Transverse colon (tissue), 4 donors: ENCODE measurements at regions of chr18 and their contacts with region 1.

Region 1: GRCh38 chr18:77114415-77115191 is 18.0 kb downstream of the MBP start:
- DNase-seq: peak; percentile 83
- H3K4me3 ChIP-seq: peak overlapping the region in 1 of 4 donors; percentile 2
- H3K27ac ChIP-seq: peak overlapping the region; percentile 83 to 92 (median 89)
- H3K4me1 ChIP-seq: peaks cover 19 to 46% (median 34%) of the 10 kb centered on the region in 4 donors
- H3K27me3 ChIP-seq: no peaks in the 10 kb centered on the region
- CTCF ChIP-seq: no peak
- EP300 ChIP-seq: peak; percentile 75
- POLR2A ChIP-seq: peak; percentile 51

Region 2: DNA sequence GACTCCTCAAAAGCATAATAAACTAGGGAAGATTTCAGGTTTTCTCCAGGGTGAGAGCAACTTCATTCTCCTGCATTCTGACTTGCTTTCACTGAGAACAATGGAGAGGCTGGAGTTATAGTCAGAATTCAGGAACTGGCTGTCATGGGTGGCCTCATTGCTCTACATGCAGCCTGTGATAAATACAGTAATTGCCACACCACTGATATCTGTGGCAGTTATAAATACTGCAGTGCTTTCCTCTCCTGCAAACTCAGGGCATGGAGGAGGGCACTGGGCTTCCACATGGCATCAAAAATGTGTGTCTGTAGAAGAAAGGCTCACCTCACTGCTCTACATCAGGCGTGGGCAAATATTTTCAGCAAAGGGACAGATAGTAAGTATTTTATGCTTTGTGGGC is 1129.8 kb before region 1 on chr18:
- in situ Hi-C with region 1: no loop called
- intact Hi-C with region 1: loop called (anchors 5 kb)
- DNase-seq: no peak
- H3K4me3 ChIP-seq: no peak overlapping the region
- H3K27ac ChIP-seq: no peak overlapping the region
- H3K4me1 ChIP-seq: no peaks in the 10 kb centered on the region
- H3K27me3 ChIP-seq: no peaks in the 10 kb centered on the region
- CTCF ChIP-seq: no peak
- EP300 ChIP-seq: no peak
- POLR2A ChIP-seq: no peak

Region 3: DNA sequence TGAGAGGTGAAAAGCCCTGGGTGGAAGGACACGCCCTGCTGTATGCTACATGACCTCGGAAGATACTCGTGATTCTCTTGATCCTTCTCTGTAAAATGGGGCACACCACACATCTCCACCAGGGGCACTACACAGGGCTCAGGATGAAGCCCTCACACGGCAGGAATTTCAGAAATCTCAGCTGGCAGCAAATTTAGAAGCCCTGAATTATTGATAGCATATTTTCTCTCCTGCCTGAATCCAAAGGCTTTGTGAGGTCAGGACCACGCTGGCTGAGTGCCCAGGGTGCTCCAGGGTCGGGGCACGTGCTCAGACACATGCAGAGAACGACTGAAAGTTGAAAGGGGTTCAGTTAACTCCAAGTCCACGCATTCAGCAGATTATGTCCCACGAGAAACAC is 92.9 kb after region 1 on chr18:
- in situ Hi-C with region 1: no loop called
- intact Hi-C with region 1: no loop called
- DNase-seq: peak; percentile 32
- H3K4me3 ChIP-seq: no peak overlapping the region
- H3K27ac ChIP-seq: peak overlapping the region; percentile 44 to 69 (median 67)
- H3K4me1 ChIP-seq: peaks cover 0 to 34% (median 5%) of the 10 kb centered on the region in 4 donors
- H3K27me3 ChIP-seq: no peaks in the 10 kb centered on the region
- CTCF ChIP-seq: peak in 4 of 5 experiments; percentile 41 to 47 (median 46)
- EP300 ChIP-seq: no peak
- POLR2A ChIP-seq: no peak

Region 4: DNA sequence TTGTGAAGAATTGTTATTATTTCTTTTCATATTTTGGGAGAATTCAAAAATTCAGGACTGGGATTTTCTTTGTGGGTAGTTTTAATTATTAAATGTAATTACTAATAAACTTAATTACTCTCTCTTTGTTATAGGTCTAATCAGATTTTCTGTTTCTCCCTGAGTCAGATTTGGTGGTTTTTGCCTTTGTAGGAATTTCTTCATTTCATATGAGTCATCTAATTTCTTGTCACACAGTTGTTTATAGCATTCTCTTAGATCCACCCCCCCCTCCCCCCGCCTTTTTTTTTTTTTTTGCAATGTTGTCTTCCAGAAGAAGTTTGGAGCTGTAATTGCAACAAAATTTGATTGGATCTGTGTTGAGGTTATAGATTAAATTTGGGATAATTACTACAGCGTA is 109.0 kb after region 1 on chr18:
- in situ Hi-C with region 1: no loop called
- intact Hi-C with region 1: no loop called
- DNase-seq: no peak
- H3K4me3 ChIP-seq: no peak overlapping the region
- H3K27ac ChIP-seq: no peak overlapping the region
- H3K4me1 ChIP-seq: peaks cover 0 to 4% (median 0%) of the 10 kb centered on the region in 4 donors
- H3K27me3 ChIP-seq: peaks cover 4% of the 10 kb centered on the region
- CTCF ChIP-seq: no peak
- EP300 ChIP-seq: no peak
- POLR2A ChIP-seq: no peak

Region 5: DNA sequence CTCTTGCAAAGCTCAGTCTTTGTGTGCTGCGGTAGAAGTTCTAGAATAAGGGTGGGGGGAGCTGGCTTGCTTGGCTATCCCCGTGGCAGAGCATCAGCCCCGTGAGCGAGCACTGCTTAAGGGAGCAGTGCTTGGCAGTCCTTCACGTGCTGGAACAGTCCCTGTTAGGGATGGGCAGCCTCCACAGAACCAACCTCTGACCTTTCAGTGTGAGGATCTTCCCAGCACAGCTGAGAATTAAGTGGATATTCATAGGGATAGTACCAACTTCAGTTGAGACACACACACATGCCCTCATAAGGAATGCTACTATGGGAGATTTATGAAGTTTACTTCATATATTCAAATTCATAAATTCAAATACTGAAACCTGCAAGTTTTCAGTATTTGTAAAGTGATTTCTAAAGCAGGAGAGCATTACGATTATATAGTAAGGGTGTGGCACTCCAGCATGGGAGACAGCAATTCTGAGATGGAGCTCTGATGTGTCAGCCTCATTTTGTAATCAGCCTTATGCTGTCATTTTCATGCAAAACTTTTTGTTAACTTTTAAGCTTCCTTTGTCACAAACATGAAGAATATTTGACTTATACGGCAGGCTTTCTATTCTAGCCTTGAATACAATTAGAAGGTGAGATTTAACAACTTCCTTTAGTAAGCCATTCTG is 1994.1 kb after region 1 on chr18:
- in situ Hi-C with region 1: no loop called
- intact Hi-C with region 1: loop called (anchors 5 kb)
- DNase-seq: no peak
- H3K4me3 ChIP-seq: no peak overlapping the region
- H3K27ac ChIP-seq: no peak overlapping the region
- H3K4me1 ChIP-seq: peaks cover 0 to 11% (median 0%) of the 10 kb centered on the region in 4 donors
- H3K27me3 ChIP-seq: no peaks in the 10 kb centered on the region
- CTCF ChIP-seq: no peak
- EP300 ChIP-seq: no peak
- POLR2A ChIP-seq: no peak